ENCODE measurements at regions of chr2 and their contacts with region 1.

Region 1: GRCh38 chr2:165293440-165294353 is 54.5 kb downstream of the SCN2A start:
- DNase-seq: peak; percentile 13 to 29
- ATAC-seq: peak; percentile 99
- H3K4me3 ChIP-seq: no peak overlapping the region
- H3K27ac ChIP-seq: no peak overlapping the region
- H3K4me1 ChIP-seq: peaks cover 0 to 5% of the 10 kb centered on the region in 2 donors
- H3K27me3 ChIP-seq: no peaks in the 10 kb centered on the region
- CTCF ChIP-seq: peak; percentile 35 to 75 (median 55)
- POLR2A ChIP-seq: no peak

Region 2: DNA sequence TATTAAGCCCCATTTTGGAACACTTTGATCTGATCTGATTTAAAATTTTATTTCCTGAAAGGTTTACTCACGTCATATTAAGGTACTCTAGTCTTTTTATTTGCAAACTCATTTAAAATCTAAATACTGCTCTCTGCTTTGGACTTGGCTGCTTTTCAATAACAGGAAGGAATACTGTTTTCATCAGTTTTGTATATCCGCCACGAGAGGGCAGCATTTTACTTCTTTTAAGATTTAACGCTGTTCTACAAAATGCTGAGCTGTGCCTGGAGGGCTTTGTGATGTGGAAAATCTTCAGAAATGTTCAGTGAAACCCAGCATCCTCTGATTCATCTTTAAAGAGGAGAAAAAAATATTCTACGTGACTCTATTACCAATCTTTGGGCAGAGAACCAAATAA is 300.9 kb before region 1 on chr2:
- in situ Hi-C with region 1: loop called in 1 of 4 experiments (anchors 25 kb)
- intact Hi-C with region 1: no loop called
- DNase-seq: no peak
- ATAC-seq: peak; percentile 50 to 66
- H3K4me3 ChIP-seq: no peak overlapping the region
- H3K27ac ChIP-seq: no peak overlapping the region
- H3K4me1 ChIP-seq: no peaks in the 10 kb centered on the region
- H3K27me3 ChIP-seq: no peaks in the 10 kb centered on the region
- CTCF ChIP-seq: peak; percentile 18 to 53 (median 33)
- POLR2A ChIP-seq: no peak

Region 3: GRCh38 chr2:165232636-165233035 is 61.1 kb before region 1 on chr2:
- in situ Hi-C with region 1: loop called in 3 of 4 experiments (anchors 5 to 10 kb)
- intact Hi-C with region 1: no loop called
- DNase-seq: no peak
- ATAC-seq: no peak
- H3K4me3 ChIP-seq: no peak overlapping the region
- H3K27ac ChIP-seq: no peak overlapping the region
- H3K4me1 ChIP-seq: no peaks in the 10 kb centered on the region
- H3K27me3 ChIP-seq: no peaks in the 10 kb centered on the region
- CTCF ChIP-seq: no peak
- POLR2A ChIP-seq: no peak

Region 4: DNA sequence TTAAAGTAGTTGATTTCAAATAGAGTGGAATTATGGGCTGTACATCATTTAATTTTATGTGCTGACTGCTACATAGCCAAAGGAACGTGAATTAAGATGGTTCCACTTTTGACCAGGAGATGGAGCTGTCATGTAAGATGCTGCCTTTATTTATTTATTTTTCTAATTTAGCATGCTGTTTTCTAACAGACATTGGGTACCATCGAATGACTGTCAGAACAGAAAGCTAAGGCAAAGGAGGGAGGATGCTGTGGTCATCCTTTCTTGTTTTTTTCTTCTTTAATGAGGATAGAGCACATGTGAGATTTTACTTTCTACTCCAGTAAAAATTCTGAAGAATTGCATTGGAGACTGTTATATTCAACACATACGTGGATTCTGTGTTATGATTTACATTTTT is 54.5 kb before region 1 on chr2 and contains the start of gene SCN2A:
- in situ Hi-C with region 1: loop called in 3 of 4 experiments (anchors 5 to 10 kb)
- intact Hi-C with region 1: loop called (anchors 1 kb)
- DNase-seq: no peak
- ATAC-seq: peak; percentile 56 to 62
- H3K4me3 ChIP-seq: no peak within 1 kb of the TSS
- H3K27ac ChIP-seq: no peak within 1 kb of the TSS
- H3K4me1 ChIP-seq: no peaks in the 10 kb centered on the region
- H3K27me3 ChIP-seq: no peaks in the 10 kb centered on the region
- CTCF ChIP-seq: peak; percentile 42 to 67 (median 52)
- POLR2A ChIP-seq: no peak
- total RNA-seq, gene SCN2A: not detected

Region 5: DNA sequence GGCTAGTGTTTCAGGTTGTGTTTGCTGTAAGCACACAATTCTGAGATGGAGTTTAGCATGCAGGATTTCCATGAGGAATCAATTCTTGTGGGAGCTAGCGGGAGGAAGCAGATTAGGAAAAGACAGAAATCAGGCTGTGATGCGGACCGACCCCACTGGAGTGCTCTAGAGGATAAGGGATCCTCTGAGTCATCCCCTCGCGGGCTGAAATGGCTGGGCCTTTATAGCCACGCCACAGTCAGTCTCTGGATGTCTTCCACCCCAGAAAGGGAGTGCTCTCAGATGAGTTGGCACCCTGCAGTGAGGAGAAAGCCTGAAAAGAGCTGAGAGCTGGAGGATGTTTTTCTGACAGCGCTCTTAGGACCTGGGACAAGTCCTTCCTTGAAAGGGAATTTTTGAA is 397.9 kb after region 1 on chr2:
- in situ Hi-C with region 1: no loop called
- intact Hi-C with region 1: no loop called
- DNase-seq: no peak
- ATAC-seq: no peak
- H3K4me3 ChIP-seq: no peak overlapping the region
- H3K27ac ChIP-seq: no peak overlapping the region
- H3K4me1 ChIP-seq: no peaks in the 10 kb centered on the region
- H3K27me3 ChIP-seq: no peaks in the 10 kb centered on the region
- CTCF ChIP-seq: no peak
- POLR2A ChIP-seq: no peak

Measured in gastrocnemius medialis (tissue), 4 donors.